GM12878 (cell line): ENCODE measurements at regions of chr3 and their contacts with region 1.

Region 1: DNA sequence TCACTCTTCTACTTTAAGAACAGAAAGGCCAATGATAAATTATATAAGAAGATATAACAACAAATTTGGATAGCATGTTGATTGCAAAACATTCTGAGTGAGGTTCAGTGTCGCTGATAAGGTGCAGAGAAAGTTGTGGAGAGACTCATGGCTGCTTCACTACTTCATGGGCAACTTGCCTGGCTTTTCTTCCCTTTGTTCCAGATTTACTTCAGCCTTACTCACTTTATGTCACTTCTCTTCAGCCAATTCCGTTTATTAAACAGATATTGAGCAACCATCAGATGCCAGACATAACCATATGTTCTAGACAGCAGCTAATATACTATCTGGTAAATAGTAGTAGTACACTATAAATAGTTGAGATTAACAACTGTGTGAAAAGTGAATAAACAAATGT is 150.0 kb upstream of the CHL1 start:
- DNase-seq: no peak
- ATAC-seq: no peak
- H3K4me3 ChIP-seq: no peak overlapping the region
- H3K27ac ChIP-seq: no peak overlapping the region
- H3K4me1 ChIP-seq: no peaks in the 10 kb centered on the region
- H3K27me3 ChIP-seq: no peaks in the 10 kb centered on the region
- CTCF ChIP-seq: no peak
- EP300 ChIP-seq: no peak
- POLR2A ChIP-seq: no peak
- RAD21 ChIP-seq: no peak

Region 2: DNA sequence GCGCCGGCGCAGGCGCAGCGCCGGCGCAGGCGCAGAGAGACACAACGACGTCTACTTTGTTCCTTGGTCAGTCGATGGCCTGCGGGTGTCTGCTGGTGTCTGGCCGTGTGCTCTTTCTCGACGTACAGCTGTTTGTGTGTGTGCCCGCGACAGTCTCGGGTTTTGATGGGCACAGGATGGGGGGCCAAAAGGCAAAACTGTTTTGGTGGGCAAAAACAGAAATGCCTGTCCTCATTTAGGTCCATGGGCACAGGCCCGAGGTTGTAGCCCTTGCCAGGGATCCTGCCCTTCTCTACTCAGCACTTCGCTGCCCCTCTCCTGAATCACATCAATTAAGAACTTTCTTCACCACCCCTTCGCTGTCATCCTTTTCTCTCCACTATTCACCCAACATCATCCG is 34.8 kb before region 1 on chr3:
- CTCF ChIA-PET with region 1: no interaction called
- POLR2A ChIA-PET with region 1: no interaction called
- RAD21 ChIA-PET with region 1: no interaction called
- SMC1A ChIA-PET with region 1: no interaction called
- in situ Hi-C with region 1: no loop called
- intact Hi-C with region 1: no loop called
- DNase-seq: no peak
- ATAC-seq: no peak
- H3K4me3 ChIP-seq: no peak overlapping the region
- H3K27ac ChIP-seq: no peak overlapping the region
- H3K4me1 ChIP-seq: no peaks in the 10 kb centered on the region
- H3K27me3 ChIP-seq: no peaks in the 10 kb centered on the region
- CTCF ChIP-seq: no peak
- EP300 ChIP-seq: no peak
- POLR2A ChIP-seq: no peak
- RAD21 ChIP-seq: no peak

Region 3: DNA sequence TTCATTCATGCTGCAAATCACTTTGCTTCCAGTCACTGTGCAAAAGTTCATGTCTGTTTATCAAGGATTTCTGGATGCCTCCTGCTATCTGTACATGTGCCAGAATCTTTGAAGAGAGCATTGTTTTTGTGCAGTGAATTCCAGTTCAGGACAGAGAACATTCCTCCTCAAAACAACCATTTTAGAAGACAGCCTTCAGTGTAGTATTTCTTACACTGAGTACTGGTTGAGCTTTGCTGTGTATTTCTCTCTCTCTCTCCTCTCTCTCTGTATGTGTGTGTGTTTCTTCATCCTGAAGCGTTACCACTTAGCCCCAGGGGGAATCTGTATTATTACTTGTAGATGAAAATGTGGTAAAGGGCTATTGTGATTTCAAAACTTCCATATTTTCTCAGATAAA is 26.2 kb after region 1 on chr3:
- CTCF ChIA-PET with region 1: no interaction called
- POLR2A ChIA-PET with region 1: no interaction called
- RAD21 ChIA-PET with region 1: no interaction called
- SMC1A ChIA-PET with region 1: no interaction called
- in situ Hi-C with region 1: no loop called
- intact Hi-C with region 1: no loop called
- DNase-seq: no peak
- ATAC-seq: peak; percentile 56
- H3K4me3 ChIP-seq: no peak overlapping the region
- H3K27ac ChIP-seq: no peak overlapping the region
- H3K4me1 ChIP-seq: no peaks in the 10 kb centered on the region
- H3K27me3 ChIP-seq: no peaks in the 10 kb centered on the region; a peak in 1 of 4 replicates
- CTCF ChIP-seq: no peak
- EP300 ChIP-seq: no peak
- POLR2A ChIP-seq: no peak
- RAD21 ChIP-seq: no peak

Region 4: GRCh38 chr3:111143-112069 is 64.8 kb after region 1 on chr3:
- CTCF ChIA-PET with region 1: no interaction called
- POLR2A ChIA-PET with region 1: no interaction called
- RAD21 ChIA-PET with region 1: no interaction called
- SMC1A ChIA-PET with region 1: no interaction called
- in situ Hi-C with region 1: no loop called
- intact Hi-C with region 1: no loop called
- DNase-seq: peak; percentile 7
- ATAC-seq: peak; percentile 83
- H3K4me3 ChIP-seq: no peak overlapping the region
- H3K27ac ChIP-seq: no peak overlapping the region
- H3K4me1 ChIP-seq: no peaks in the 10 kb centered on the region
- H3K27me3 ChIP-seq: no peaks in the 10 kb centered on the region
- CTCF ChIP-seq: no peak
- EP300 ChIP-seq: no peak
- POLR2A ChIP-seq: no peak
- RAD21 ChIP-seq: no peak

Region 5: GRCh38 chr3:131151-131888 is 84.7 kb after region 1 on chr3:
- CTCF ChIA-PET with region 1: no interaction called
- POLR2A ChIA-PET with region 1: no interaction called
- RAD21 ChIA-PET with region 1: no interaction called
- SMC1A ChIA-PET with region 1: no interaction called
- in situ Hi-C with region 1: no loop called
- intact Hi-C with region 1: no loop called
- DNase-seq: no peak
- ATAC-seq: no peak
- H3K4me3 ChIP-seq: no peak overlapping the region
- H3K27ac ChIP-seq: no peak overlapping the region
- H3K4me1 ChIP-seq: no peaks in the 10 kb centered on the region
- H3K27me3 ChIP-seq: no peaks in the 10 kb centered on the region
- CTCF ChIP-seq: no peak
- EP300 ChIP-seq: no peak
- POLR2A ChIP-seq: no peak
- RAD21 ChIP-seq: no peak

Region 6: DNA sequence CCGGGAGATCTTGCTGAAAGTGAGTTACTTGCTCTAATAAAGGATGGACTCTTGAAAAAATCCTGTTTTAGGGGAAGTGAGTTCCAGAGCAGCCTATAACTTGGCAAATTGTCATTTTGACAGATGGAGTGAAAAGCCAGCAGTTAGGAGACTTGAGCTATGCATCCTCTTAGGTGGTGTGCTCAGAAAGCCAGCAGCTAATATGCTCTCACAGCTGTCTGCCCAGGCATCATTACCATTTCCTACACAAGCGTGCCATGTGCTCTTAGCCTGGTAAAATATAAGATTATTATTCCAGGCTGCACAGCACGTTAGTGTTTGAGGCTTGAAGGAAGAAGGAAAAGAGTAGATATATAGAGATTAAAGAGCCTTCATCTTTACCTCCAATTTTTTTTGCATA is 301.0 kb after region 1 on chr3:
- CTCF ChIA-PET with region 1: interaction called, 415 read pairs
- POLR2A ChIA-PET with region 1: no interaction called
- RAD21 ChIA-PET with region 1: interaction called, 328 read pairs
- SMC1A ChIA-PET with region 1: interaction called, 331 read pairs
- in situ Hi-C with region 1: no loop called
- intact Hi-C with region 1: no loop called
- DNase-seq: no peak
- ATAC-seq: no peak
- H3K4me3 ChIP-seq: no peak overlapping the region
- H3K27ac ChIP-seq: no peak overlapping the region
- H3K4me1 ChIP-seq: no peaks in the 10 kb centered on the region
- H3K27me3 ChIP-seq: no peaks in the 10 kb centered on the region
- CTCF ChIP-seq: no peak
- EP300 ChIP-seq: no peak
- POLR2A ChIP-seq: no peak
- RAD21 ChIP-seq: no peak

Region 7: DNA sequence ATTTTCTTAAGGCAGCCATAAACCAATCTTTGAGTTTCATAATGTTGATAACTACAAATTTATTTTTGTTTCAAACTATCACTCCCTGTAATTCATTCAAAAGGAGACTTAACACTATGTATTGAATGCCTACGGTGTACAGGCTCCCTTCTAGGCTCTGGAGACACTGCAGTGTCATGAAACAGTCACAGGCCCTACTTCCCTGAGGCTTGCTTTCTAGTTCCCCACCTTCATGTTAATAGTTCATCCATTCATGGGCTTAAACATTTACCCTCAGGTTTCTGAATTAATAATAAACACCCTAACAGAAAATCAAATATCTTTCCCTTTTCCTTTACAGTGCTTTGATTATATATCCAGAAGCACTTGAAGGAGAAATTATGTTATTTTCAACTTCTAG is 318.7 kb after region 1 on chr3:
- CTCF ChIA-PET with region 1: interaction called, 7 read pairs
- POLR2A ChIA-PET with region 1: no interaction called
- RAD21 ChIA-PET with region 1: interaction called, 7 read pairs
- SMC1A ChIA-PET with region 1: interaction called, 10 read pairs
- in situ Hi-C with region 1: no loop called
- intact Hi-C with region 1: no loop called
- DNase-seq: no peak
- ATAC-seq: peak; percentile 90
- H3K4me3 ChIP-seq: no peak overlapping the region
- H3K27ac ChIP-seq: no peak overlapping the region
- H3K4me1 ChIP-seq: no peaks in the 10 kb centered on the region
- H3K27me3 ChIP-seq: no peaks in the 10 kb centered on the region
- CTCF ChIP-seq: no peak
- EP300 ChIP-seq: no peak
- POLR2A ChIP-seq: no peak
- RAD21 ChIP-seq: no peak

Region 8: DNA sequence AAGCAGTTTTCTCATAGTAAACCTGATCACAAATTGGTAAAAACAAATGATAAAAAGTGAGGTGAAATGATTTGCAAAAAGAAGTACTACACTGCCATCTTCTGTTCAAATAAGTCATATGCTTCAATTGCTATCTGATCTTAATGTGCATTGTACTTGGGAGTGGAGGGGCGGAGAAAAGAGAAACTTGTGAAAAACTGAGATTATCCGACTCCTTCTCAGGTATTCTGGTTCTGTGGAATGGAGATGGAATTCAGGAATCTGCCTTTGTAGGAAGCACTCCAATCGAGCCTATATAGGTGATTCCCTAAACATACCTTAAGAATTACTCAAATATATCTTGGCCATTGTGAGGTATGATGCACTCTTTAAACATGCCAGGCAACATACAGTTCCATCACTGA is 330.6 kb after region 1 on chr3:
- CTCF ChIA-PET with region 1: interaction called, 54 read pairs
- POLR2A ChIA-PET with region 1: no interaction called
- RAD21 ChIA-PET with region 1: interaction called, 20 read pairs
- SMC1A ChIA-PET with region 1: interaction called, 11 read pairs
- in situ Hi-C with region 1: no loop called
- intact Hi-C with region 1: loop called (anchors 1 kb)
- DNase-seq: no peak
- ATAC-seq: peak; percentile 88
- H3K4me3 ChIP-seq: no peak overlapping the region
- H3K27ac ChIP-seq: no peak overlapping the region
- H3K4me1 ChIP-seq: no peaks in the 10 kb centered on the region
- H3K27me3 ChIP-seq: no peaks in the 10 kb centered on the region
- CTCF ChIP-seq: peak; percentile 17 to 65 (median 33); a peak in 2 of 6 replicates
- EP300 ChIP-seq: no peak
- POLR2A ChIP-seq: no peak
- RAD21 ChIP-seq: peak; percentile 61